WTC11 (cell line): ENCODE measurements at regions of chr1 and their contacts with region 1.

Region 1: DNA sequence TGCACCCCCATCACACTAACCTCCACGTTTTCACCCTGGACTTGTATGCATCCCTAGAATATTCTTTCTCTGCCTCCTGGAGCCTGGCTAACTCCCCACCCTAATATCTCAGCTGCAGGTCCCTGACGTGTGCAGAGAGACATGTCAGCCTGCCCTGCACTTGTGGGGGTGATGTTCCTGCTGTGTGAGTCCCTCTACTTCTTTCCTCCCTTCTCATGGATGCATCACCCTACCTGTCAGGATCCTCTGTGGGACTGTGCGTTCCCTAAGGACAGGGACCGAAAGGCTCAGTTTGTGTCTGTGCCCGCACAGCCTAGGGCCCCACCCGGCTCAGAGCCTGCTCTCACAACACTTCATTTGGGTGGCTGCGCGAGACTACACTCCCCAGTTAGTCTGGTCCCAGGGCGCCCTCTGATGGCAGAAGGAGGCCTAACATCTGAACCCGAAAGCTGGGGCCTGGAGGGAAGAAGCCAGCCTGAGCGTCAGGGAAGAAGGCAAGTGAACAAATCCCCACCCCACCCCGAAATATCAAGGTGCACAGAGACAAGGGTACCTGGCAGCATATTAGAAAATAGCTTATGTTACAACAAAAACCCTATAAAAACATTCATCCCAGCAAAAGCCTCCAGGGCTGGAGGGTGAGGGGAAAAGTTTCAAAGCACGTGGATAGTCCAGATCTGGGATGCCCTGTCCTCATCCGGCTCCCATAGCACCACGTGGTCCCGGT is 3.7 kb downstream of the CD52 start:
- DNase-seq: peak; percentile 98
- ATAC-seq: peak; percentile 83
- H3K4me3 Mint-ChIP-seq: no peak overlapping the region
- H3K27ac Mint-ChIP-seq: peak overlapping the region; percentile 93
- H3K4me1 Mint-ChIP-seq: peaks cover 20% of the 10 kb centered on the region
- H3K27me3 Mint-ChIP-seq: no peaks in the 10 kb centered on the region
- CTCF ChIP-seq: peak; percentile 85

Region 2: GRCh38 chr1:26279456-26280332 is 41.8 kb before region 1 on chr1 and contains the start of gene SH3BGRL3:
- CTCF ChIA-PET with region 1: interaction called, 306 read pairs
- POLR2A ChIA-PET with region 1: interaction called, 5 read pairs
- DNase-seq: peak; percentile 76
- ATAC-seq: peak; percentile 71
- H3K4me3 Mint-ChIP-seq: peak within 1 kb of the TSS; percentile 85
- H3K27ac Mint-ChIP-seq: peak within 1 kb of the TSS; percentile 78
- H3K4me1 Mint-ChIP-seq: peaks cover 40% of the 10 kb centered on the region
- H3K27me3 Mint-ChIP-seq: no peaks in the 10 kb centered on the region
- CTCF ChIP-seq: no peak
- total RNA-seq, gene SH3BGRL3: 70.8 to 92.9 TPM (median 92.3 TPM) in 3 replicates

Region 3: GRCh38 chr1:26306290-26307229 is 14.9 kb before region 1 on chr1 and contains the start of gene UBXN11:
- CTCF ChIA-PET with region 1: interaction called, 16 read pairs
- POLR2A ChIA-PET with region 1: no interaction called
- DNase-seq: peak; percentile 94
- ATAC-seq: peak; percentile 100
- H3K4me3 Mint-ChIP-seq: peak within 1 kb of the TSS; percentile 99
- H3K27ac Mint-ChIP-seq: peak within 1 kb of the TSS; percentile 96
- H3K4me1 Mint-ChIP-seq: peaks cover 23% of the 10 kb centered on the region
- H3K27me3 Mint-ChIP-seq: no peaks in the 10 kb centered on the region
- CTCF ChIP-seq: no peak
- total RNA-seq, gene UBXN11: 12.4 to 14.1 TPM (median 14.1 TPM) in 3 replicates